CD8-positive, alpha-beta T cell (primary cell): ENCODE measurements at regions of chr11 and their contacts with region 1.

Region 1: DNA sequence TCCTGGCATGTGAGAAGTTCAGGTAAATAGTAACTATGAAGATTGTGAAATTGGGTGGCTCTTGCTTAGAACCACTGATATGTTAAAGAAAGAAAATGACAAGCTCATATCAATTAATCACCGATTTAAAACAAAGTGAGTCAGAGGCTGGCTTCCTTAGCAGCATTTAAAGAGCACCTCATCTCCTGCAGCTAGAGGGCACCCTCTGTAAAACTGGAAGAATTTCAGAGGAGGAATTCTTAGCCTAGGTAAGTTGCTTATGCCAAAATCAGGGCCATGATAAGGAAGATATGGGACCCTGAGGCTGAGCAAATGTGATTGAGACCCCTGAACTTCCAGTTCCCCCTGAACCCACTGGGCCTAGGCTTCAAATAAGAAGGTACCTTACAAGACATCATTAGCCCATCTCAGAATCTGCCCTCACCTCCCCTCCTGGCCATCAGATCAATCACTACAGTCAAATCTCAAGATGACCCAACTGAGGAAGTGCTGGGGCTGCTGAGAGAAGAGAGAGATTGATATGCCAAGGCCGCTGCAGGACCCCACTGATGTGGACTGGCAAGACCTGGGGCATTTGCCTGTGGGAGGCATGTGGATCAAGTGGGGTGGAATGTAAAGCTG is 8.6 kb upstream of the CD3E start:
- DNase-seq: peak in 7 of 9 experiments; percentile 22 to 79 (median 59)
- ATAC-seq: peak; percentile 81
- H3K4me3 ChIP-seq: no peak overlapping the region
- H3K4me3 Mint-ChIP-seq: no peak overlapping the region
- H3K27ac ChIP-seq: peak overlapping the region in 1 of 2 experiments; percentile 52
- H3K27ac Mint-ChIP-seq: peak overlapping the region; percentile 46
- H3K4me1 ChIP-seq: peaks cover 7% of the 10 kb centered on the region
- H3K4me1 Mint-ChIP-seq: peaks cover 27% of the 10 kb centered on the region
- H3K27me3 ChIP-seq: no peaks in the 10 kb centered on the region
- H3K27me3 Mint-ChIP-seq: no peaks in the 10 kb centered on the region
- CTCF ChIP-seq: peak; percentile 64

Region 2: GRCh38 chr11:117458275-117458674 is 837.7 kb before region 1 on chr11:
- CTCF ChIA-PET with region 1: no interaction called
- POLR2A ChIA-PET with region 1: no interaction called
- intact Hi-C with region 1: no loop called
- DNase-seq: no peak
- ATAC-seq: no peak
- H3K4me3 ChIP-seq: no peak overlapping the region
- H3K4me3 Mint-ChIP-seq: no peak overlapping the region
- H3K27ac ChIP-seq: no peak overlapping the region
- H3K27ac Mint-ChIP-seq: no peak overlapping the region
- H3K4me1 ChIP-seq: no peaks in the 10 kb centered on the region
- H3K4me1 Mint-ChIP-seq: no peaks in the 10 kb centered on the region
- H3K27me3 ChIP-seq: no peaks in the 10 kb centered on the region
- H3K27me3 Mint-ChIP-seq: no peaks in the 10 kb centered on the region
- CTCF ChIP-seq: no peak

Region 3: GRCh38 chr11:117678658-117679406 is 617.1 kb before region 1 on chr11:
- CTCF ChIA-PET with region 1: no interaction called
- POLR2A ChIA-PET with region 1: no interaction called
- intact Hi-C with region 1: no loop called
- DNase-seq: no peak
- ATAC-seq: no peak
- H3K4me3 ChIP-seq: no peak overlapping the region
- H3K4me3 Mint-ChIP-seq: no peak overlapping the region
- H3K27ac ChIP-seq: no peak overlapping the region
- H3K27ac Mint-ChIP-seq: no peak overlapping the region
- H3K4me1 ChIP-seq: no peaks in the 10 kb centered on the region
- H3K4me1 Mint-ChIP-seq: peaks cover 2% of the 10 kb centered on the region
- H3K27me3 ChIP-seq: no peaks in the 10 kb centered on the region
- H3K27me3 Mint-ChIP-seq: peaks cover 4% of the 10 kb centered on the region
- CTCF ChIP-seq: no peak

Region 4: DNA sequence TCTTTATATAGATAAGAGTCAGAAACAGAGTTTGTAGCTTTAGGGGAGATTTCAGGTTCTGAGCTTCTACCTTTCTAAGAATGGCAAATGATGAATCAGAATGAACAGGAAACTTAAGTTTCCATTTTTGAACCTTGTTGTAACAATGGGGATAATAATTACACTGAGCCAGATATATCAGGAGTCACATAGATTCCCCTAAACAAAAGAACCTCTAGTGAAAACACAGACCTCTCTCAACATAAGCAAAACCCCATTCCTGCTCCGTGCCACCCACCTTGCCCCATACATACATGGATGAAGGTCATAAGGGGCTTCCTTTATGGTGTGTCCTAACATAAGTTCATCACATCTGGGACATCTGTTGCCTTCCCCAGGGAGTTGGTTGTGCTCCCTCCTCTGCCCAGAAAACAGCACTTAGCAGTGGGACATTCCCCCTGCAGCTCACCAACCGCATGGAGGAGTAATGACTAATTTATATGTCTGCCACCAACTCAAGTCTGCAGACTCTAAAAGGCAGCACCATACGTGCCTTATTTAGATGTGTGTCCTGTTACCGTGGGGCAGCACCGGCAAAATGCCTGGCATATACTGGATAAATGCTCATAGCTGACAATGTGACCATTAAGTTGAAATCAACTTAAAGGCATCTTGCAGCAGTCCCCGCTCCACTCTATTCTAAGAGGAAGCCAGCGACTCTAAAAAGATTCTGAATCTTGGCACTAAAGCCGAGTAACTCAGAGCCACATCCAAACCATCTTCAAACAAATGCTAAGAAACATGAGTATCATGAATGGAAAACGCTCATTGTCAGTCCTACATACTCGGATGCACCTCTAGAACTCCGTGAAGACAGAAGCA is 79.1 kb before region 1 on chr11:
- CTCF ChIA-PET with region 1: interaction called, 12 read pairs
- POLR2A ChIA-PET with region 1: interaction called, 3 read pairs
- intact Hi-C with region 1: no loop called
- DNase-seq: peak in 5 of 9 experiments; percentile 46 to 76 (median 51)
- ATAC-seq: peak; percentile 70
- H3K4me3 ChIP-seq: peak overlapping the region; percentile 20 to 31
- H3K4me3 Mint-ChIP-seq: peak overlapping the region; percentile 81
- H3K27ac ChIP-seq: peak overlapping the region; percentile 10 to 43
- H3K27ac Mint-ChIP-seq: peak overlapping the region; percentile 95
- H3K4me1 ChIP-seq: peaks cover 100% of the 10 kb centered on the region
- H3K4me1 Mint-ChIP-seq: peaks cover 98% of the 10 kb centered on the region
- H3K27me3 ChIP-seq: no peaks in the 10 kb centered on the region
- H3K27me3 Mint-ChIP-seq: no peaks in the 10 kb centered on the region
- CTCF ChIP-seq: no peak

Region 5: GRCh38 chr11:118277306-118277705 is 18.6 kb before region 1 on chr11:
- CTCF ChIA-PET with region 1: interaction called, 13 read pairs
- POLR2A ChIA-PET with region 1: no interaction called
- intact Hi-C with region 1: no loop called
- DNase-seq: no peak
- ATAC-seq: no peak
- H3K4me3 ChIP-seq: no peak overlapping the region
- H3K4me3 Mint-ChIP-seq: no peak overlapping the region
- H3K27ac ChIP-seq: no peak overlapping the region
- H3K27ac Mint-ChIP-seq: no peak overlapping the region
- H3K4me1 ChIP-seq: peaks cover 9% of the 10 kb centered on the region
- H3K4me1 Mint-ChIP-seq: peaks cover 20% of the 10 kb centered on the region
- H3K27me3 ChIP-seq: no peaks in the 10 kb centered on the region
- H3K27me3 Mint-ChIP-seq: no peaks in the 10 kb centered on the region
- CTCF ChIP-seq: no peak

Region 6: GRCh38 chr11:118311518-118311917 is 15.6 kb after region 1 on chr11:
- CTCF ChIA-PET with region 1: interaction called, 17 read pairs
- POLR2A ChIA-PET with region 1: interaction called, 3 read pairs
- intact Hi-C with region 1: loop called in 1 of 2 experiments (anchors 2 kb)
- DNase-seq: peak in 2 of 9 experiments; percentile 37 to 55
- ATAC-seq: peak; percentile 27
- H3K4me3 ChIP-seq: no peak overlapping the region
- H3K4me3 Mint-ChIP-seq: peak overlapping the region; percentile 26
- H3K27ac ChIP-seq: peak overlapping the region in 1 of 2 experiments; percentile 57
- H3K27ac Mint-ChIP-seq: peak overlapping the region; percentile 89
- H3K4me1 ChIP-seq: peaks cover 95% of the 10 kb centered on the region
- H3K4me1 Mint-ChIP-seq: peaks cover 95% of the 10 kb centered on the region
- H3K27me3 ChIP-seq: no peaks in the 10 kb centered on the region
- H3K27me3 Mint-ChIP-seq: no peaks in the 10 kb centered on the region
- CTCF ChIP-seq: no peak

Region 7: DNA sequence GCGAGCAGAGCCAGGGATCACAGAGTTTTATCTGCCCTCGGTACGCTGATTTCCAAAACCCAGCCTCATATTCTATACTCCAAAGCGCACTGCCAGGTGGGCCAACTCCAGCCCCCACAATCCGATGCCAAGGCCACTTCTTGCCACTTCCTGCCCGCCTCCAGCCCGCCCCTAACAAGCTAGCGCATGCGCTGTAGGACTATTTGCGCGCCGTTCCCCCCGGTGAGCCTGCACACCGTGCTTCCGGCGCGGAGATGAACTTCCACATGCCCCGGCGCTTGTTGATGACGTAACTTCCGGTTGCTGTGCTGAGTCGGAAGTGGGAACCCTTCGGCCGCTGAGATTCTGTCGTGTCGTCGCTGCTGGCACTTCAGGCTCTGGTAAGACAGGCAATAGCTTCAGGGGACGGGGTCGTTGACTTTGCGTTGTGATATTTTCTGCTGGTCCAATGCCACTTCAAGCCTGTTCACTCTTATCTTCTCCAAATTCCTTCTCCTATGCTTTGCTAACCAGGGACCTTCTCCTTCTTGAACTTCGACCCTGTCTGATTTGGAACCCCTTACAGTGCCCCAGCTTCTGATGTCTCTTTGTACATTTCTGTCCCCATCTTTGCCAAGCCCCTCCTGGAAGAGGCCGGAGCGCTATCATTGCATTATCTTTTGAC is 63.5 kb after region 1 on chr11 and contains the start of gene UBE4A:
- CTCF ChIA-PET with region 1: interaction called, 15 read pairs
- POLR2A ChIA-PET with region 1: interaction called, 10 read pairs
- intact Hi-C with region 1: no loop called
- DNase-seq: peak; percentile 93 to 100 (median 99)
- ATAC-seq: peak; percentile 80
- H3K4me3 ChIP-seq: peak within 1 kb of the TSS; percentile 66 to 89
- H3K4me3 Mint-ChIP-seq: peak within 1 kb of the TSS; percentile 93
- H3K27ac ChIP-seq: peak within 1 kb of the TSS; percentile 89 to 93
- H3K27ac Mint-ChIP-seq: peak within 1 kb of the TSS; percentile 98
- H3K4me1 ChIP-seq: peaks cover 38% of the 10 kb centered on the region
- H3K4me1 Mint-ChIP-seq: peaks cover 52% of the 10 kb centered on the region
- H3K27me3 ChIP-seq: no peaks in the 10 kb centered on the region
- H3K27me3 Mint-ChIP-seq: no peaks in the 10 kb centered on the region
- CTCF ChIP-seq: no peak
- total RNA-seq, gene UBE4A: 53.7 to 57.5 TPM

Region 8: GRCh38 chr11:118621071-118621783 is 325.3 kb after region 1 on chr11:
- CTCF ChIA-PET with region 1: no interaction called
- POLR2A ChIA-PET with region 1: no interaction called
- intact Hi-C with region 1: no loop called
- DNase-seq: peak in 3 of 9 experiments; percentile 18 to 25 (median 25)
- ATAC-seq: peak; percentile 62
- H3K4me3 ChIP-seq: peak overlapping the region in 1 of 2 experiments; percentile 48
- H3K4me3 Mint-ChIP-seq: peak overlapping the region; percentile 69
- H3K27ac ChIP-seq: no peak overlapping the region
- H3K27ac Mint-ChIP-seq: no peak overlapping the region
- H3K4me1 ChIP-seq: peaks cover 10% of the 10 kb centered on the region
- H3K4me1 Mint-ChIP-seq: peaks cover 9% of the 10 kb centered on the region
- H3K27me3 ChIP-seq: peaks cover 0 to 4% of the 10 kb centered on the region in 2 experiments
- H3K27me3 Mint-ChIP-seq: peaks cover 18% of the 10 kb centered on the region
- CTCF ChIP-seq: no peak